ENCODE measurements at regions of chr1 and their contacts with region 1.

Region 1: DNA sequence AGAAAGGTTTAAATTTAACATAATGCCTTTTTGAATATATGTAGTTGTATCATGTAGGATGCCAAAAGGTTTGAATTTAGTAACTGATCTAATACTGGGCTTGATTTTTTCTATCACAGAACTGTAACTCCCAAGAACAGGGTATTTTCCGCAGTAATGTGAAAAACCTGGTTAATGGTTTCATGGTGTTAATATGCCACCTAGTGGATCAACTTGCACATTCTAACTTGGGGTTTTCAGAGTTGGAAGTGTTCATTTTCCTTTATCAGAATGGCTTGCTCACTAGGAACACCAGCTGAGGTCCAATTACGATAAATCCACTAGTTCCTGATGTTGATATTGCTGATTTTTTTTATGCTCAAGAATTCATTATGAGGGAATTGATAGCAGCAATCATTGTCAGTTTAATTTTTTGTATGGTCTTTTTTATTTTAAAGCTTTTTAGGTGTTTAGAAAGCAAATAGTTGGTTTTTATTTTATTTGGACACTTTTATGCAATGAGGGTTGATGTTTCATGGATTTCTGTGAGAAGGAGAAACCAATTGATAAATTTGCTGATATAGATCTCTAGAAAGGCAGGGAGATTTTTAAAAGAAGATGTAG is 157.2 kb downstream of the PLA2G4A start:
- DNase-seq: no peak
- ATAC-seq: no peak
- H3K4me3 Mint-ChIP-seq: no peak overlapping the region
- H3K27ac Mint-ChIP-seq: no peak overlapping the region
- H3K4me1 Mint-ChIP-seq: no peaks in the 10 kb centered on the region
- H3K27me3 Mint-ChIP-seq: peaks cover 2% of the 10 kb centered on the region

Region 2: GRCh38 chr1:186605762-186606350 is 380.1 kb before region 1 on chr1:
- CTCF ChIA-PET with region 1: interaction called, 11 read pairs
- DNase-seq: peak; percentile 49
- ATAC-seq: peak; percentile 57
- H3K4me3 Mint-ChIP-seq: no peak overlapping the region
- H3K27ac Mint-ChIP-seq: no peak overlapping the region
- H3K4me1 Mint-ChIP-seq: no peaks in the 10 kb centered on the region
- H3K27me3 Mint-ChIP-seq: peaks cover 38% of the 10 kb centered on the region

Region 3: GRCh38 chr1:187001198-187001889 is 15.4 kb after region 1 on chr1:
- CTCF ChIA-PET with region 1: no interaction called
- DNase-seq: no peak
- ATAC-seq: no peak
- H3K4me3 Mint-ChIP-seq: no peak overlapping the region
- H3K27ac Mint-ChIP-seq: no peak overlapping the region
- H3K4me1 Mint-ChIP-seq: no peaks in the 10 kb centered on the region
- H3K27me3 Mint-ChIP-seq: no peaks in the 10 kb centered on the region